PC-3 (cell line): ENCODE measurements at regions of chr10 and their contacts with region 1.

Region 1: GRCh38 chr10:5283305-5284158 is 81.2 kb upstream of the UCN3 start:
- DNase-seq: peak; percentile 53
- ATAC-seq: peak; percentile 83
- H3K4me3 ChIP-seq: peak overlapping the region; percentile 26; the same call in 1 of the 2 replicates
- H3K27ac ChIP-seq: no peak overlapping the region
- H3K4me1 ChIP-seq: no peaks in the 10 kb centered on the region
- H3K27me3 ChIP-seq: no peaks in the 10 kb centered on the region
- CTCF ChIP-seq: peak; percentile 69

Region 2: GRCh38 chr10:4270116-4270515 is 1013.4 kb before region 1 on chr10:
- CTCF ChIA-PET with region 1: no interaction called
- POLR2A ChIA-PET with region 1: no interaction called
- intact Hi-C with region 1: no loop called
- DNase-seq: peak; percentile 46
- ATAC-seq: peak; percentile 65
- H3K4me3 ChIP-seq: no peak overlapping the region
- H3K27ac ChIP-seq: peak overlapping the region; percentile 35
- H3K4me1 ChIP-seq: peaks cover 6% of the 10 kb centered on the region; the same call in 1 of the 2 replicates
- H3K27me3 ChIP-seq: no peaks in the 10 kb centered on the region
- CTCF ChIP-seq: no peak

Region 3: DNA sequence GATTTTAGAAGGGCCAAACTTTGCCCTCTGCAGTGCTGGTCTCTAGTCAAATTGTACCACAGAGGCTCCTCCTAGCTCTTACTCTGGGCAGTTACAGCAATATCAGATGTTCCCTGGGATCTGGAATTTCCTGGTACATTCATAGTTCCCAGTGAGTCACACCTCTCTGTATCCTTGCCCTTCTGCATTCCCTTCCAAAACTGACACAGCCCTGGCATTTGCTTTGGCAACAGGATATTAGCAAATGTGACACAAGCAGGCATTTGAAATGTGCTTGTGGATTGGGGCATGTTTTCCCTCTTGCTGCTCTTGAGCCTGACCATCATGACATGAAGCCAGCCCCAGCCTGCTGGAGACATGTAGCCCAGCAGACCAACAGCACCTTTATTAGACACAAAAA is 742.2 kb before region 1 on chr10:
- CTCF ChIA-PET with region 1: no interaction called
- POLR2A ChIA-PET with region 1: no interaction called
- intact Hi-C with region 1: no loop called
- DNase-seq: peak; percentile 88
- ATAC-seq: peak; percentile 100
- H3K4me3 ChIP-seq: no peak overlapping the region
- H3K27ac ChIP-seq: peak overlapping the region; percentile 97
- H3K4me1 ChIP-seq: peaks cover 17% of the 10 kb centered on the region
- H3K27me3 ChIP-seq: no peaks in the 10 kb centered on the region
- CTCF ChIP-seq: peak; percentile 37; the same call in 1 of the 2 replicates

Region 4: DNA sequence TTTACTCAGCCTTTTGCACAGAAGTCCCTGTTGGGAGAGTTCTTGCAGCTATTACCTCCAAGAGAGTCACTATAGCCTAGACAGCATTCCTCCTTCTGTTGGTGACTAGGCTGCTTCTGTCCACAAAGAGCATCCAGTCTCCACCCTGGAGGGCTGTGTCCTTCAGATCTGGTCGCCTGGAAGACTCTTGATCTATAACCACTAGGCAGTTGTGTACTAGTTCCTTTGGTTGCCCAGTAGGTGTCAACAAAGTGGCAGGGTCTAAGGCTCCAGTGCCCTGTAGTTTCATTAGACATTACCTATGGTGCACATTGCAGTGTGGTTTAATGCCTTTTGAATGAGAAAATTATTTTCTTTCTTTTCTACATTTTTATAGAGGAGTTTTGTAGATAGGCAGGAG is 268.6 kb before region 1 on chr10:
- CTCF ChIA-PET with region 1: no interaction called
- POLR2A ChIA-PET with region 1: no interaction called
- intact Hi-C with region 1: loop called (anchors 5 kb)
- DNase-seq: peak; percentile 11
- ATAC-seq: peak; percentile 21
- H3K4me3 ChIP-seq: no peak overlapping the region
- H3K27ac ChIP-seq: no peak overlapping the region
- H3K4me1 ChIP-seq: peaks cover 21% of the 10 kb centered on the region
- H3K27me3 ChIP-seq: no peaks in the 10 kb centered on the region
- CTCF ChIP-seq: peak; percentile 33; the same call in 1 of the 2 replicates

Region 5: DNA sequence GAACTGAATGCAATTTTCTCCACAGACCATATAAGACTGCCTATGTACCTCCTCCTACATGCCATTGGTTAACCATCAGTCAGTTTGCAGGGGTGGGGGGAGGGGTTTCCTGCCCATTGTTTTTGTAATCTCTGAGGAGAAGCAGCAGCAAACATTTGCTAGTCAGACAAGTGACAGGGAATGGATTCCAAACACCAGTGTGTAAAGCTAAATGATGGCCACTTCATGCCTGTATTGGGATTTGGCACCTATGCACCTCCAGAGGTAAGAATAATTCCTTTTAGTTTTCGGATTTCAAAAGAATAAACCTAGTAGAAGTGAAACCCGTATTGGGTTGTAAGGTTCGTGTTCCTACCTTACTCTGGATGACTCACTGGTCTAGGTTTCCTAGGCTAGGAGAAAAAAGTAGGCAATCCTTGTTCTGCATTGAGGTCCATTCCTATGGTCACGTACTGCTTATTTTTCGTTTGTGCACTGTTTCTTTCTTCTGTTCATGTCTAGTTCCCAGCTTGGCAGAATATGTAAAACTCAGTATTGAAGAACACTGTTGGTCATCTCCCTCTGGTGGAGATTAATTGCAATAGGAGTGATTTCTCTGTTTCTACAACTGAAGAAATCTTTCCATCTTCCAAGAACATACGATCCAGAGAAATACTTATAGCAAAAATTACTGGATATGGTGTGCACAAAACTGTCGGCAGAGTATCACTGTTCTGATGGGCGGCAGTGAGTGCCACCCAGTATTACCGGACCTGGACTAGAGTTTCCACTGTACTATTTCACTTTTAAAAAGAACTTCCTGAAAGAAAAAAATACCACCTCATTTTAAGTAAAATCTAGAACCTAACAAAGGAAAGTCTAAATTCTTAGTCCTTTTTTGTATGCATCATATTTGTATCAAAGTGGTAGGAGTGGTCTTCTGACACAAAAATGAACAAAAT is 189.0 kb before region 1 on chr10 and contains the start of gene AKR1C3:
- CTCF ChIA-PET with region 1: no interaction called
- POLR2A ChIA-PET with region 1: no interaction called
- intact Hi-C with region 1: loop called (anchors 1 kb)
- DNase-seq: peak; percentile 53
- ATAC-seq: peak; percentile 84
- H3K4me3 ChIP-seq: peak within 1 kb of the TSS; percentile 74
- H3K27ac ChIP-seq: peak within 1 kb of the TSS; percentile 31
- H3K4me1 ChIP-seq: no peaks in the 10 kb centered on the region
- H3K27me3 ChIP-seq: no peaks in the 10 kb centered on the region
- CTCF ChIP-seq: peak; percentile 65
- total RNA-seq, gene AKR1C3: 15.8 and 24.0 TPM in 2 replicates

Region 6: GRCh38 chr10:5199398-5199797 is 84.1 kb before region 1 on chr10:
- CTCF ChIA-PET with region 1: no interaction called
- POLR2A ChIA-PET with region 1: no interaction called
- intact Hi-C with region 1: loop called (anchors 5 kb)
- DNase-seq: no peak
- ATAC-seq: no peak
- H3K4me3 ChIP-seq: no peak overlapping the region
- H3K27ac ChIP-seq: no peak overlapping the region
- H3K4me1 ChIP-seq: no peaks in the 10 kb centered on the region
- H3K27me3 ChIP-seq: no peaks in the 10 kb centered on the region
- CTCF ChIP-seq: no peak

Region 7: GRCh38 chr10:5434017-5434753 is 150.7 kb after region 1 on chr10:
- CTCF ChIA-PET with region 1: no interaction called
- POLR2A ChIA-PET with region 1: no interaction called
- intact Hi-C with region 1: loop called (anchors 5 kb)
- DNase-seq: peak; percentile 43
- ATAC-seq: peak; percentile 62
- H3K4me3 ChIP-seq: no peak overlapping the region
- H3K27ac ChIP-seq: no peak overlapping the region
- H3K4me1 ChIP-seq: no peaks in the 10 kb centered on the region
- H3K27me3 ChIP-seq: no peaks in the 10 kb centered on the region
- CTCF ChIP-seq: peak; percentile 66